Calu3 (cell line): ENCODE measurements at regions of chr1 and their contacts with region 1.

Region 1: GRCh38 chr1:89953072-89953626 is 41.8 kb upstream of the ZNF326 start:
- DNase-seq: peak; percentile 80
- H3K4me3 Mint-ChIP-seq: no peak overlapping the region
- H3K27ac Mint-ChIP-seq: peak overlapping the region; percentile 33
- H3K4me1 Mint-ChIP-seq: peaks cover 21% of the 10 kb centered on the region
- H3K27me3 Mint-ChIP-seq: no peaks in the 10 kb centered on the region
- CTCF ChIP-seq: no peak

Region 2: GRCh38 chr1:89552471-89553081 is 400.6 kb before region 1 on chr1:
- CTCF ChIA-PET with region 1: no interaction called
- intact Hi-C with region 1: no loop called
- DNase-seq: peak; percentile 40
- H3K4me3 Mint-ChIP-seq: peak overlapping the region; percentile 39
- H3K27ac Mint-ChIP-seq: peak overlapping the region; percentile 62
- H3K4me1 Mint-ChIP-seq: peaks cover 53% of the 10 kb centered on the region
- H3K27me3 Mint-ChIP-seq: no peaks in the 10 kb centered on the region
- CTCF ChIP-seq: no peak

Region 3: DNA sequence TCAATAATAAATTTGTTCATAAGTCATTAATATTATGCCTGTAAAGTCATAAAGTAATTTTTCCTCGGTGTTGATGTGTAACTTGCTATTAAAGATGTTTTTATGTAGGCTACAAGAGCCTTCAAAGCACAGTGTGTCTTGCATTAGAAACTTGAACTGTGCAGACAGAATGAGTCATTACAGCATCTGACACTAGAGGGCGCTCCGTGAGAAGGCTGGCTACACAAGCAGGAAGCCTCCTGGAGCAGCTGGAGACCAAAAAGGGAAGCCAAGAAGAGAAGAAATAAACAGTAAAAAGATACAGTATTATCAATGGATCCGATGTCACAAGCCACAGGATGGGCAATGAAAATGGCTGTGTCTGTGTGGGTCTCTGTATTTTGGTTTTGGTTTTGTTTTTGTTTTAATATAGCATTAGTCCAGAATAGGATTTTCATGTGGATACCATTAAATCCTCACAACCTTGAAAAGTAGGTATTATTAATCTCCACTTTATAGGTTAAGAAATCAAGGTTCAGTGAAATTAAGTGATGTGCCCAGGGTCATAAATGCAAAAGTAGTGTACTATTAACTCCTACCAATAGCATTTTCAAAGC is 148.4 kb before region 1 on chr1:
- CTCF ChIA-PET with region 1: interaction called, 4 read pairs
- intact Hi-C with region 1: loop called (anchors 1 kb)
- DNase-seq: peak; percentile 90
- H3K4me3 Mint-ChIP-seq: no peak overlapping the region
- H3K27ac Mint-ChIP-seq: no peak overlapping the region
- H3K4me1 Mint-ChIP-seq: peaks cover 6% of the 10 kb centered on the region
- H3K27me3 Mint-ChIP-seq: peaks cover 10% of the 10 kb centered on the region
- CTCF ChIP-seq: peak; percentile 80

Region 4: DNA sequence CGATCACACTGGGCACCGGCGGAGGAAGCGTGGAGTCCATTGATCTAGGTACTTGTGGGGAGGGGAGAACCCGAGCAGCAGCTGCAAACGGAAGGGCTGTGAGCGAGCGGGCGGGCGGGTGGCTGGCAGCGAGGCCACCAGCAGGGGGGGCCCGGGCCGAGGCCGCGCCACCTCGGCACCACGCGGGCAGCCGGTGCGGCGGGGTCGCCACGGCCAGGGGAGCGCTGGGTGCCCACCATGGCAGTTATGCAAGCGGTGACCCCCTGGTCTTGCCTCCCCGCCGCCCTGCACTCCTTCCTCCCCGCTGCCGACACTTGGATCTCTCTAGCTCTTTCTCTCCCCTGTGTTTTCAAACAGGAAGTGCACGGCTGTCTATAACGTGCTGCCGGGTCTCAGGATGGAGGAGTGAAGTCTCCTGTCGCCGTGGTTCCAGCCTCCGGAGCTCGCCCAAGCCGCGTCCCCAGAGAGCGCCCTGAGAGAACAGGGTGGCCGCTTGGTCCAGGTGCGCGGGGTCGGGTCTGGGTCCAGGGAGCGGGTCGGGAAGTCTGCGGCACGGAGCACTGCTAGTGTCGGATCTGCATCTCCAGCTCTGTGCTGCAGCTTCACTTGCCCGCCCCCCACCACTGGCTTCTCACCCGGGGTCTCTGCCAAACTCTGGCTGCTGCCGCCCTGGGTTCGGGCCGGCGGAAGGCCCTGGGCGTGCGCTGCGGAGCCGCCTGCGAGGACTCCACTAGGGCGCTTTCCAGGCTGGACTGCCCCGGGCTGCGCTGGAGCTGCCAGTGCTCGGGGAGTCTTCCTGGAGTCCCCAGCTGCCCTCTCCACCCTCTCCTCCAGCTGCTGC is 109.6 kb before region 1 on chr1:
- CTCF ChIA-PET with region 1: no interaction called
- intact Hi-C with region 1: loop called (anchors 5 kb)
- DNase-seq: peak; percentile 82
- H3K4me3 Mint-ChIP-seq: peak overlapping the region; percentile 93
- H3K27ac Mint-ChIP-seq: peak overlapping the region; percentile 84
- H3K4me1 Mint-ChIP-seq: peaks cover 8% of the 10 kb centered on the region
- H3K27me3 Mint-ChIP-seq: no peaks in the 10 kb centered on the region
- CTCF ChIP-seq: peak; percentile 88

Region 5: GRCh38 chr1:89865498-89866385 is 87.4 kb before region 1 on chr1:
- CTCF ChIA-PET with region 1: interaction called, 10 read pairs
- intact Hi-C with region 1: no loop called
- DNase-seq: peak; percentile 11
- H3K4me3 Mint-ChIP-seq: peak overlapping the region; percentile 17
- H3K27ac Mint-ChIP-seq: peak overlapping the region; percentile 58
- H3K4me1 Mint-ChIP-seq: peaks cover 39% of the 10 kb centered on the region
- H3K27me3 Mint-ChIP-seq: no peaks in the 10 kb centered on the region
- CTCF ChIP-seq: no peak

Region 6: GRCh38 chr1:89918127-89918793 is 34.9 kb before region 1 on chr1:
- CTCF ChIA-PET with region 1: interaction called, 12 read pairs
- intact Hi-C with region 1: no loop called
- DNase-seq: no peak
- H3K4me3 Mint-ChIP-seq: no peak overlapping the region
- H3K27ac Mint-ChIP-seq: no peak overlapping the region
- H3K4me1 Mint-ChIP-seq: no peaks in the 10 kb centered on the region
- H3K27me3 Mint-ChIP-seq: no peaks in the 10 kb centered on the region
- CTCF ChIP-seq: no peak

Region 7: DNA sequence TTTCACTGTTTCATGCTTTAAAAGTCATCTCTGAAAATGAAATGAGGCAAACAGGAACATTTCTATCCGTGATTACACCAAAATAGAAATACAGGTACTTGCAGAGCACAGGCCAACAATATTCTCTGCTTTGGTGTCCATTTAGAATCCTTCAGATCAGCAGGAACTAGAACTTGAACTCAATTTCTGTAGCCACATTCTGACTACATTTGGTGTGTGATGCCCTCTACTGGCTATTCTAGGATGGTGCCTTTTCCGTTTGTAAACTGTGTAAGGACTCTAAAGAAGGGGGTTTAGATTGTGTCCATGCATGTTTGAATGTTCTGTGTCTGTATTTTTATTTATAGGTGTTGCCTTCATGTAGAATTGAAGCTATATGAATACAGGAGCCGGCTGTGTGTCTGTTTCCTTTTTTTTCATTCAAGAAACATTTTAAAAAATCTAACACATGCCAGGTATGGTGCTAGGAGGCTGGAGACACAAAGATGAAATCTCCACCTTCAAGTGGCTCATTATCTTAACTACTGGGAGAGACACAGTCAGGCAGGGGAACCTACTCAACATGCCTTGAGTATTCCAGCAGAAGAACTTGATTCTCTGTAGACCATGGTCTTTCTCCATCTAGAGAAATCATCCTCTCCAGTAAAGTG is 34.1 kb after region 1 on chr1:
- CTCF ChIA-PET with region 1: no interaction called
- intact Hi-C with region 1: no loop called
- DNase-seq: peak; percentile 48
- H3K4me3 Mint-ChIP-seq: no peak overlapping the region
- H3K27ac Mint-ChIP-seq: no peak overlapping the region
- H3K4me1 Mint-ChIP-seq: peaks cover 17% of the 10 kb centered on the region
- H3K27me3 Mint-ChIP-seq: no peaks in the 10 kb centered on the region
- CTCF ChIP-seq: peak; percentile 54